H1 (cell line): ENCODE measurements at regions of chr3 and their contacts with region 1.

Region 1: GRCh38 chr3:69161587-69162307 is 39.4 kb upstream of the LMOD3 start:
- DNase-seq: no peak
- H3K4me3 ChIP-seq: no peak overlapping the region
- H3K27ac ChIP-seq: no peak overlapping the region
- H3K4me1 ChIP-seq: no peaks in the 10 kb centered on the region; a peak in 1 of 7 replicates
- H3K27me3 ChIP-seq: no peaks in the 10 kb centered on the region
- CTCF ChIP-seq: peak in 2 of 3 experiments; percentile 83 to 84; a peak in 3 of 4 replicates
- EP300 ChIP-seq: no peak
- POLR2A ChIP-seq: no peak
- RAD21 ChIP-seq: peak; percentile 96 to 98

Region 2: DNA sequence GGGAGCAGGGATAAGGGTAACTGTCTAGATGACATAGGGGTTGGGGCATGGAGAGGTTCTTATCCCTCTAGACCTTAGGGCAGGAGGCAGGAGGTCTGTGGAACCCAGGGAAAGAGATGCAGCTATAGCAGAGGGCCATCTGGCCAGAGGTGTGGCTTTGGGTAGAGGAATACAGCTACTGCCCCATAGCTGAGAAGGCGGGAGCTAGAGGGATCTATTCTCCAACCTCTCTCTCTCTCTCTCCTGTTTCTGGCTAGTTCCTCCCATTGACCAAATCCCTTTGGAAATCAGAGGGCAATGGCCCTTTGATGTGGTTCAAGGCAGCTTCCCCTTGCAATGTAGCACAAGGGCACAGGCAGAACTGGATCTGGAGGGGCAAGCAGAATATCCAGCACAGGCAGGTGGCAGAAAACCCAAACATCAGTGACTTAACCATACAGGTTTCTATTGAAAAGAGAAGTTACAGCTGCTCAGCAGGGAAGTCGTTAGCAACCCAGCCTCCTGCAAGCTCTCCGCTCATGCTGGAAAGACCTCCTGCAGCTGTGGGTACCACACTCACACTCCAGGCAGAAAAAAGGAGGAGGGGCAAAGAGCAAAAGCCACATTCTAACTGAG is 17.0 kb before region 1 on chr3:
- CTCF ChIA-PET with region 1: interaction called, 32 read pairs
- POLR2A ChIA-PET with region 1: interaction called, 3 read pairs
- DNase-seq: peak; percentile 41 to 58
- H3K4me3 ChIP-seq: no peak overlapping the region
- H3K27ac ChIP-seq: no peak overlapping the region
- H3K4me1 ChIP-seq: peaks cover 0 to 6% (median 4%) of the 10 kb centered on the region in 4 experiments; a peak in 5 of 7 replicates
- H3K27me3 ChIP-seq: peaks cover 0 to 6% (median 3%) of the 10 kb centered on the region in 4 experiments; a peak in 3 of 7 replicates
- CTCF ChIP-seq: no peak
- EP300 ChIP-seq: no peak
- POLR2A ChIP-seq: no peak
- RAD21 ChIP-seq: no peak

Region 3: GRCh38 chr3:69200384-69201068 is 38.8 kb after region 1 on chr3:
- CTCF ChIA-PET with region 1: interaction called, 13 read pairs
- POLR2A ChIA-PET with region 1: no interaction called
- DNase-seq: no peak
- H3K4me3 ChIP-seq: peak overlapping the region in 1 of 4 experiments; percentile 8; a peak in 1 of 8 replicates
- H3K27ac ChIP-seq: no peak overlapping the region
- H3K4me1 ChIP-seq: peaks cover 2 to 11% (median 6%) of the 10 kb centered on the region in 4 experiments; a peak in 3 of 7 replicates
- H3K27me3 ChIP-seq: no peaks in the 10 kb centered on the region
- CTCF ChIP-seq: no peak
- EP300 ChIP-seq: no peak
- POLR2A ChIP-seq: no peak
- RAD21 ChIP-seq: no peak

Region 4: GRCh38 chr3:69318410-69318809 is 156.7 kb after region 1 on chr3:
- CTCF ChIA-PET with region 1: interaction called, 471 read pairs
- POLR2A ChIA-PET with region 1: no interaction called
- DNase-seq: no peak
- H3K4me3 ChIP-seq: no peak overlapping the region
- H3K27ac ChIP-seq: no peak overlapping the region
- H3K4me1 ChIP-seq: peaks cover 0 to 4% (median 0%) of the 10 kb centered on the region in 4 experiments; a peak in 1 of 7 replicates
- H3K27me3 ChIP-seq: no peaks in the 10 kb centered on the region; a peak in 1 of 7 replicates
- CTCF ChIP-seq: no peak
- EP300 ChIP-seq: no peak
- POLR2A ChIP-seq: no peak
- RAD21 ChIP-seq: no peak

Region 5: DNA sequence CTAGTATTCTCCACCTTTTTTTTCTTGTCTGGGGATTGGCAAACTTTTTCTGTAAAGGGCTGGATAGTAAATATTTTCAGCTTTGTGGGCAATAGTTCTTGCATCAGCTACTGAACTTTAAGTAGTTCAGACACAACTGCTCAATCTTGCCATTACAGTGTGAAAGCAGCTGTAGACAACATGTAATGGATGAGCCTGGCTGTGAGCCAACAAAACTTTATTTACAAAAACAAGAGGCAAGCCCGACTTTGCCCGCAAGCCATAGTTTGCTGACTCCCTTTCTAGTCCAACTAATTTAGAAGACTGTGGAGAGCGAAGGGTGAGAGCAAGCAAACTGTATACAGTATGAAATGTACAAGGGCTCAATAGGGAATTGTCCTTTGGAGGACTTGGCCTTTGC is 217.9 kb after region 1 on chr3:
- CTCF ChIA-PET with region 1: interaction called, 14 read pairs
- POLR2A ChIA-PET with region 1: no interaction called
- DNase-seq: no peak
- H3K4me3 ChIP-seq: no peak overlapping the region
- H3K27ac ChIP-seq: no peak overlapping the region
- H3K4me1 ChIP-seq: no peaks in the 10 kb centered on the region
- H3K27me3 ChIP-seq: peaks cover 0 to 3% (median 0%) of the 10 kb centered on the region in 4 experiments; a peak in 4 of 7 replicates
- CTCF ChIP-seq: no peak
- EP300 ChIP-seq: no peak
- POLR2A ChIP-seq: no peak
- RAD21 ChIP-seq: no peak

Region 6: GRCh38 chr3:69425261-69425660 is 263.5 kb after region 1 on chr3:
- CTCF ChIA-PET with region 1: interaction called, 94 read pairs
- POLR2A ChIA-PET with region 1: no interaction called
- DNase-seq: no peak
- H3K4me3 ChIP-seq: no peak overlapping the region
- H3K27ac ChIP-seq: no peak overlapping the region
- H3K4me1 ChIP-seq: no peaks in the 10 kb centered on the region; a peak in 1 of 7 replicates
- H3K27me3 ChIP-seq: no peaks in the 10 kb centered on the region
- CTCF ChIP-seq: peak in 2 of 3 experiments; percentile 79 to 85; a peak in 3 of 4 replicates
- EP300 ChIP-seq: no peak
- POLR2A ChIP-seq: no peak
- RAD21 ChIP-seq: peak; percentile 83 to 89